GM12878 (cell line): ENCODE measurements at regions of chr17 and their contacts with region 1.

Region 1: GRCh38 chr17:63764716-63765115 is 8.7 kb downstream of the CCDC47 start:
- DNase-seq: no peak
- ATAC-seq: no peak
- H3K4me3 ChIP-seq: no peak overlapping the region
- H3K27ac ChIP-seq: no peak overlapping the region
- H3K4me1 ChIP-seq: no peaks in the 10 kb centered on the region; the same call in 1 of the 2 replicates
- H3K27me3 ChIP-seq: no peaks in the 10 kb centered on the region
- CTCF ChIP-seq: no peak
- EP300 ChIP-seq: no peak
- POLR2A ChIP-seq: no peak
- RAD21 ChIP-seq: no peak

Region 2: GRCh38 chr17:63741221-63742049 is 23.3 kb before region 1 on chr17 and contains the start of gene STRADA:
- CTCF ChIA-PET with region 1: interaction called, 4 read pairs
- POLR2A ChIA-PET with region 1: interaction called, 21 read pairs
- RAD21 ChIA-PET with region 1: interaction called, 12 read pairs
- SMC1A ChIA-PET with region 1: interaction called, 3 read pairs
- in situ Hi-C with region 1: no loop called
- intact Hi-C with region 1: no loop called
- DNase-seq: peak; percentile 95
- ATAC-seq: peak; percentile 90
- H3K4me3 ChIP-seq: peak within 1 kb of the TSS; percentile 96
- H3K27ac ChIP-seq: peak within 1 kb of the TSS; percentile 97
- H3K4me1 ChIP-seq: peaks cover 11% of the 10 kb centered on the region
- H3K27me3 ChIP-seq: no peaks in the 10 kb centered on the region
- CTCF ChIP-seq: no peak
- EP300 ChIP-seq: peak; percentile 55 to 74; a peak in 3 of 4 replicates
- POLR2A ChIP-seq: peak; percentile 98
- RAD21 ChIP-seq: no peak
- polyA plus RNA-seq, gene STRADA: 13.3 to 15.6 TPM

Region 3: DNA sequence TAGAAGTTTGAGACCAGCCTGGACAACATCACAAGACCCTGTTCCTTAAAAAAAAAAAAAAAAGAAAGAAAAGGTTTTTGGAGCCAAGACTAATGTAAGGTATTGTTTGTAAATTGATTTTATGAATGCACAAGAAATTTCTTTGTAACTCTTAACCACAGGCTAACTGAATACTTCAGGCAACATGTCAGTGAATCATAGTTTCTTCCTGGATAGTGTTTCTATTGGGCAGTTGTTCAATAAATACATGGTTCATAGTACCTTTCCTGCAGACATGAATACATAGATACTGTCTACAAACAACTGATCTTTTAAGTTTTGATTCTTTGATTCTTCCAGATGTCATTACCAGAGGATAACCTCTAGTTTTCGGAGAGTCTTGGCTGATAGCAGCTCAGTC is 20.8 kb after region 1 on chr17:
- CTCF ChIA-PET with region 1: interaction called, 4 read pairs
- POLR2A ChIA-PET with region 1: interaction called, 4 read pairs
- RAD21 ChIA-PET with region 1: interaction called, 3 read pairs
- SMC1A ChIA-PET with region 1: interaction called, 10 read pairs
- in situ Hi-C with region 1: no loop called
- intact Hi-C with region 1: no loop called
- DNase-seq: no peak
- ATAC-seq: no peak
- H3K4me3 ChIP-seq: no peak overlapping the region
- H3K27ac ChIP-seq: no peak overlapping the region
- H3K4me1 ChIP-seq: peaks cover 8% of the 10 kb centered on the region; the same call in 1 of the 2 replicates
- H3K27me3 ChIP-seq: no peaks in the 10 kb centered on the region
- CTCF ChIP-seq: no peak
- EP300 ChIP-seq: no peak
- POLR2A ChIP-seq: no peak
- RAD21 ChIP-seq: no peak